ENCODE measurements at regions of chr9 and their contacts with region 1.

Region 1: DNA sequence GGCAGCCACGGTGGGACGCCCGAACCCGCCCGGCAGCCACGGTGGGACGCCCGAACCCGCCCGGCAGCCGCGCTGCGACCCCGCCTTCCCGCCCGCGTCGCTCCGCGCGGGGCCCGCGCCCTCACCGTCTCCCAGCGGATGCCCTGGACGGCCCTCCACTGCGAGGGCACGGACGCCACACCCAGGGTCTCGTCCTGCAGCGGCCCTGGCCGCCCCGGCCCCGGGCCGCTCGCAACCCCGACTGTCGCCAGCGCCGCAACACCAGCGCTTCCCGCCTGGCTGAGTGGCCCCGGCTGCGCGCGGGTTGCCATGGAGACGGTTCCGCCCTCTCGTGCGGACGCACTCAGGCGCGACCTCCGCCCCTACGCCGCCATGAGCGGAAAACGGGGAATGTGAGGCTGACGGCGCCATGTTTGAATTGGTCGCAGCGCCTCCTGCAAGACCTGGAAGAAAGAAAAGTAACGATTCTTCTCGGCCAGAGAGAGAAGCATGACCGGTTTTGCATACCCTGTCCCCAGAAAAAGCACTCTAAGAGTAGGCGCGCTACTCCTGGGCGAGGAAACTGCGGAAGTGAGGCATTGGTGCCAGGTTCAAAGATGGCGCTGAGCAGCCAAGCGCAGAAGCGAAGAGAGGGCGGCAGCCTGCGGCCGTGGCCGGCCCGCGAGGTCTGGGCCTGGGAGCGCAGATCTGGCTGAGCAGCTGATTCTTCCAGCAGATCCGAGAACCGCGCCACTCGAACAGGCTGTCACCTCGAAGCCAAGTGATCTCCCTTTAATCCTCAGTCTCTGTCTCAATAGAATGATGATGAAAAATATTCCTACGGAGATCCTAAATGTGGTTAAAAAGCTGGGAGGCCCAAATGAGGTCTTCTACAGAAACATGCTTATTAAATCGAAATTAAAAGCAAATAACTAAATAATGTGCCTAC is at the start of gene DYNC2I2:
- DNase-seq: peak; percentile 99
- ATAC-seq: peak; percentile 98
- H3K4me3 Mint-ChIP-seq: peak within 1 kb of the TSS; percentile 82
- H3K27ac Mint-ChIP-seq: peak within 1 kb of the TSS; percentile 100
- H3K4me1 Mint-ChIP-seq: peaks cover 6% of the 10 kb centered on the region
- H3K27me3 Mint-ChIP-seq: no peaks in the 10 kb centered on the region
- total RNA-seq, gene DYNC2I2: 26.7 to 35.7 TPM

Region 2: GRCh38 chr9:128504485-128505413 is 151.9 kb before region 1 on chr9 and contains the start of gene GLE1:
- CTCF ChIA-PET with region 1: no interaction called
- POLR2A ChIA-PET with region 1: no interaction called
- intact Hi-C with region 1: loop called in 1 of 2 experiments (anchors 1 kb)
- DNase-seq: peak; percentile 98
- ATAC-seq: peak; percentile 99
- H3K4me3 Mint-ChIP-seq: peak within 1 kb of the TSS; percentile 95
- H3K27ac Mint-ChIP-seq: peak within 1 kb of the TSS; percentile 99
- H3K4me1 Mint-ChIP-seq: peaks cover 21% of the 10 kb centered on the region
- H3K27me3 Mint-ChIP-seq: no peaks in the 10 kb centered on the region
- total RNA-seq, gene GLE1: 52.5 to 54.4 TPM

Region 3: GRCh38 chr9:128702445-128702948 is 45.8 kb after region 1 on chr9 and contains the start of gene PKN3:
- CTCF ChIA-PET with region 1: interaction called, 3 read pairs
- POLR2A ChIA-PET with region 1: interaction called, 3 read pairs
- intact Hi-C with region 1: loop called in 1 of 2 experiments (anchors 1 kb)
- DNase-seq: peak; percentile 95
- ATAC-seq: peak; percentile 85
- H3K4me3 Mint-ChIP-seq: peak within 1 kb of the TSS; percentile 73
- H3K27ac Mint-ChIP-seq: peak within 1 kb of the TSS; percentile 74
- H3K4me1 Mint-ChIP-seq: peaks cover 10% of the 10 kb centered on the region
- H3K27me3 Mint-ChIP-seq: no peaks in the 10 kb centered on the region
- total RNA-seq, gene PKN3: 14.6 to 14.9 TPM

Region 4: GRCh38 chr9:128786681-128787601 is 130.3 kb after region 1 on chr9 and contains the start of gene TBC1D13:
- CTCF ChIA-PET with region 1: no interaction called
- POLR2A ChIA-PET with region 1: no interaction called
- intact Hi-C with region 1: loop called in 1 of 2 experiments (anchors 1 kb)
- DNase-seq: peak; percentile 94
- ATAC-seq: peak; percentile 97
- H3K4me3 Mint-ChIP-seq: peak within 1 kb of the TSS; percentile 87
- H3K27ac Mint-ChIP-seq: peak within 1 kb of the TSS; percentile 87
- H3K4me1 Mint-ChIP-seq: peaks cover 18% of the 10 kb centered on the region
- H3K27me3 Mint-ChIP-seq: no peaks in the 10 kb centered on the region
- total RNA-seq, gene TBC1D13: 10.5 to 14.0 TPM

Region 5: GRCh38 chr9:129028192-129028957 is 371.7 kb after region 1 on chr9 and contains the start of gene SH3GLB2:
- CTCF ChIA-PET with region 1: no interaction called
- POLR2A ChIA-PET with region 1: no interaction called
- intact Hi-C with region 1: loop called in 1 of 2 experiments (anchors 5 kb)
- DNase-seq: peak; percentile 98
- ATAC-seq: peak; percentile 93
- H3K4me3 Mint-ChIP-seq: peak within 1 kb of the TSS; percentile 81
- H3K27ac Mint-ChIP-seq: peak within 1 kb of the TSS; percentile 52
- H3K4me1 Mint-ChIP-seq: peaks cover 17% of the 10 kb centered on the region
- H3K27me3 Mint-ChIP-seq: no peaks in the 10 kb centered on the region
- total RNA-seq, gene SH3GLB2: 49.1 to 53.7 TPM

Measured in activated CD4-positive, alpha-beta T cell treated with anti-CD3 and anti-CD28 coated beads for 36 hours (primary cell).